Panc1 (cell line): ENCODE measurements at regions of chr4 and their contacts with region 1.

Region 1: GRCh38 chr4:11765849-11766453 is 337.3 kb upstream of the HS3ST1 start:
- DNase-seq: peak; percentile 15
- ATAC-seq: no peak; the same call in 1 of the 2 replicates
- H3K4me3 ChIP-seq: no peak overlapping the region
- H3K27ac ChIP-seq: no peak overlapping the region
- H3K4me1 ChIP-seq: no peaks in the 10 kb centered on the region
- H3K27me3 ChIP-seq: no peaks in the 10 kb centered on the region
- CTCF ChIP-seq: peak; percentile 70; the same call in 1 of the 2 replicates

Region 2: DNA sequence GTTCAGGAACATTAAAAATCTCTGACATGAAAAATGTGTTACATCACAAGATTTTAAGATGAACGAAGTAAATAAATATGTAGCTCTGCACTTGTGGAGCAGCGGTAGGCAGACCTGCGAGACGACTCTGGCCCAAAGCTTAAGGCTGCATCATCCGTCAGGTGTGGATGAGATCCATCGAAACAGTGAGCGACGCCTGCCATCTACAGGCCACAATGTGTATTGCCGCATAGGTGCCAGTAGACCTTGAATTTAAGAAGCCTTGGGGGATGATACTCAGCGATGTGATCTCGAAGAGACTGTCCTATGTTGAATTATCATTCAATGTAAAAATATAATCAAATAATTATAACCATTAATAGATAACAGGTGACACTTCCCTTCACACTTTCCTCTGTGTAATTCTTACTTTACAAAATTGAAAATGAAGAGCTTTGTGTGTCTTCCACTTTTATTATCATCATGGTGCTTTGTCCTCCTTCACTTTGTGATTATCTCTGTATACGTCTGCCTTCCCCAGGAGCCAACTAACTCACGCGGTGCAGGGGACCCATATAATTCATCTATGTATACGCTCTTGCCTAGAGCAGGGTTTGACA is 867.2 kb after region 1 on chr4:
- CTCF ChIA-PET with region 1: no interaction called
- POLR2A ChIA-PET with region 1: no interaction called
- in situ Hi-C with region 1: no loop called
- intact Hi-C with region 1: loop called (anchors 10 kb)
- DNase-seq: peak; percentile 41
- ATAC-seq: peak; percentile 68
- H3K4me3 ChIP-seq: no peak overlapping the region
- H3K27ac ChIP-seq: no peak overlapping the region
- H3K4me1 ChIP-seq: no peaks in the 10 kb centered on the region
- H3K27me3 ChIP-seq: no peaks in the 10 kb centered on the region
- CTCF ChIP-seq: peak; percentile 83